Tibial artery (tissue), 4 donors: ENCODE measurements at regions of chr3 and their contacts with region 1.

Region 1: DNA sequence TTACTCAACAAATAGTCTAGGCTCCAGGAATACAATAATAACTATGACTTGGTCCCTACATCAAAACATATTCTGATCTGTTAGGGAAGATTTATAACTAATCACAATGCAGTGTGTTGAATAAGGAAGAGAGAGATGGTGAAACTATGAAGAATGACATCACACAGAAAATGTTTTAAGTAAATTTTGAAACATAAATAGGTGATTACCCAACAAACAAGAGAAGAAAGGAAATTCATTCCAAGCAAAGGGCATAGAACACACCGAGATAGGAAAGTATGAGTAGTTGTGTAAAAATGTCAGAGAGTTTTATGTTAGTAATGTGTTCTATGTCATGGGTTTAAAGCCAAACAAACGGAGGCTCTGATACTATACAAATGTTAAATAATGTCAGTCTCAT is 13.4 kb downstream of the SEC62 start:
- DNase-seq: no peak
- H3K4me3 ChIP-seq: no peak overlapping the region
- H3K27ac ChIP-seq: no peak overlapping the region
- H3K4me1 ChIP-seq: no peaks in the 10 kb centered on the region
- H3K27me3 ChIP-seq: no peaks in the 10 kb centered on the region
- CTCF ChIP-seq: no peak

Region 2: DNA sequence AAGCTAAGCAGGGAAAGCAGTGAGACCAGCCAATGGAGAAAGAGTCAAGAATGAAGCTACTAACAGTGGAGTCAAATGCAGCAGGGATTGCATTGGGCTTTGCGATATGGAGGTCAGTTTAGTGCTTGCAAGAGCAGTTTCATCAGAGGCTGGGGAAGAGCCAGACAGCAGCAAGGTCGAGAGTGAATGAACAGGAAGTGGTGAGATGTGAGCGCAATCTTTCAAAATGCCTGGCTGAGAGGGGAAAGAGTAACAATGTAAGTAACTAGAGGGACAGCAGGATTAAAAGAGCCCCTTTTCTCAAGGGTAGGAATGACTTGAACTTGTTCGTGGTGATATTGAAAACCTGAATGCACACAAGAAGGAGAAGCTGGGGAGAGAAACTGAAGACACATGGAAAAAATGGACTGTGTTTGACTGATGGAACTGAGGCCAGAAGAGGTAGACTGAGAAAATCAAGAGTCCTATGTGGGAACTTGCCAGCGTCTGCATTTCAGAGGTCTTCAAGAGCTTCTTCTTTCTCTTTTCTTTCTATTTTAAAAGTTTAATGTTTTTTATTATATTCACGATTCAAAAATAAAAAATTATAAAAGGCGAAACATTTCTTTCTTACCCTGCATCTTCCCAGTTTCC is 27.1 kb after region 1 on chr3:
- intact Hi-C with region 1: no loop called
- DNase-seq: peak in 1 of 2 donors; percentile 35
- H3K4me3 ChIP-seq: no peak overlapping the region
- H3K27ac ChIP-seq: no peak overlapping the region
- H3K4me1 ChIP-seq: no peaks in the 10 kb centered on the region
- H3K27me3 ChIP-seq: peaks cover 0 to 4% of the 10 kb centered on the region in 2 donors
- CTCF ChIP-seq: no peak

Region 3: DNA sequence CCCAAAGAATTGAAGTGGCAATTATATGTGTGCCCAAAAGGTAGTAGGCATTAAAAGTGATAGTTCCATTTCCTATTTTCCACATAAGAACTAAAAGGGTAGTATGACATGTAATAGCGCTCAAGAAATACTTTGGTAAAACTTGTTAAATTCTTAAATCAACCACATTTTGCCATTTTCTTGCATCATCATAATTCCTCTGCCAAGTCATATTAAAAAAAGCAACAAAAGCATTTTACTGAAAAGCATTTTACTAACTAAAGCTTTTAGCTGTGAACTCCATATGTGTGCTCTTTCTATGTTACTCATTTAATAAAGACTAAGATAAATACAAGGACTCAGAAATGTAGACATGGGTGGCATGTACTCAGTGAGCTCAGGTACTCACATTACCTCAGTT is 127.9 kb after region 1 on chr3:
- intact Hi-C with region 1: loop called (anchors 10 kb)
- DNase-seq: no peak
- H3K4me3 ChIP-seq: no peak overlapping the region
- H3K27ac ChIP-seq: no peak overlapping the region
- H3K4me1 ChIP-seq: no peaks in the 10 kb centered on the region
- H3K27me3 ChIP-seq: no peaks in the 10 kb centered on the region
- CTCF ChIP-seq: no peak

Region 4: DNA sequence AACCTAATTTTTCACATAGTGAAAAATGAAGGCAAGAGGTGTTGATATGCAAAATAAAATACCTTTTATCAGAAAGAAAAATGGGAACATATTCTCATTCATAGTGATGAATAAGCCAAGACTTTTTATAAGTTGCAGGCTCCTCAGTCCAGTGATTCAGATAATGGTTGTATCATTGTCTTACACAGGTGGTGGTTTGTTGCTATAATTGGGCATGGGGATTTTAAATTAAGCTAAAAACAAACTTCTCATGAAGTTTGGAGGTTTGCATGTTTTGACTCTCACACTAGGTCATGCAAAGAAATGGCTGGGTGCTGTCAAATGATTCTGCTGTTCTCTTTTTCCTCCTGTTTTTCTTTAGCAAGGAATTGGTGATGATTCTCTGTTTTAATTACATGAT is 316.6 kb after region 1 on chr3:
- intact Hi-C with region 1: no loop called
- DNase-seq: no peak
- H3K4me3 ChIP-seq: no peak overlapping the region
- H3K27ac ChIP-seq: no peak overlapping the region
- H3K4me1 ChIP-seq: no peaks in the 10 kb centered on the region
- H3K27me3 ChIP-seq: no peaks in the 10 kb centered on the region
- CTCF ChIP-seq: no peak